ENCODE measurements at regions of chr1 and their contacts with region 1.

Region 1: DNA sequence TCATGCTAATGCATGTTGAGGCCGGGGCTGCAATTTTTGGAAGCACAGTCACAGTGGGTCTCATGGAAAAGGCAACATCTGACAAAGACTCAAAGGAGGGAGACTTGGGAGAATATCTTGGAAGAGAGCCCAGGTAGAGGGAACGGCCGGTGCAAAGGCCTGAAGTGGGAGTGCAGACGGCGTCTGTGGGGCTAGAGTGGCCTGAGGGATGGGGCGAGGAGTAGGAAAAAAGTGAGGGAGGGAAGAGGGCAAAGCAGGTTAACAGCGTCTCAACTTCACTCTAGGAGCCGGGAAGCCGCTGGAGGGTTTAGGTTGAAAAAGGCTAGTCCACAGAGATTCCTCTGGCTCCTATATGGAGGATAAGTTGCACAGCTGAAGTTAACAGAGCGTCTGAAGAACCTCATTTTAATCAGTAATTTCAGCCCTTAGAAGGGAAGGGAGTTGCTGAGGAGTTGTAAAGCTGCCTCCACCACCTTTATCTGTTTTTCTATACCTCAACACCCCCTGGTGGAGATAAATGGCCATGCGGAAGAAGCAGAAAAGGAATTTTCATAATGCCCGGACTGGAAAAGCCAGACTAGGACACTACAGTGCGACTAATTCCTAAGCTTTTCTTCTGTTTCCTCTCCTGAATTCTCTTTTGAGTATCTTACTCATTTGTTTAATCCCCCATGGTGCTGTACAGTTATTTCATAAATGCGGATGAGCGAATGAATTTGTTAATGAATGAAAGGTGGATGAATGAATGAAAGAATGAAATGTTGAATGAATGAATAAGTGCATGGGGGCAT is 78.7 kb upstream of the ZNF281 start:
- DNase-seq: peak; percentile 74
- H3K4me3 ChIP-seq: no peak overlapping the region
- H3K27ac ChIP-seq: no peak overlapping the region
- H3K4me1 ChIP-seq: no peaks in the 10 kb centered on the region
- CTCF ChIP-seq: peak; percentile 95

Region 2: DNA sequence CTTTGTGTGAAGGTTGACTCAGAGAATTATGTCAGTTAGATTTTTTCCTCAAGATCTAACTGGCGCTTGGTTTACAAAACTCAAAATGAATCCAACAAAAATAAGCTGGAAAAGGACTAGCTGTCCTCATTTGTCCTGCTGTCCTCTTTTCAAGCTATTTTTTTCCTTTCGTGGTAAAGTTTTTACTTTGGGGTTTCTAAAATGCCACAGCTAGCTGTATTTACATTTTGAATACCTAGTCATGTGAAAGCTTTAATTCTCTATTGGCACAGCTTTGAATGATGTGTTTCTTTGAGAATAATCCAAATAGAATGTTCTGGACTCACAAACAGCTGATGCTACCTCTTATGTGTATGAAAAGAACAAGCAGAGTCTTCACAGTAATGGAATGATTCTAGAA is 1134.7 kb before region 1 on chr1:
- CTCF ChIA-PET with region 1: no interaction called
- POLR2A ChIA-PET with region 1: no interaction called
- intact Hi-C with region 1: no loop called
- DNase-seq: no peak
- H3K4me3 ChIP-seq: no peak overlapping the region
- H3K27ac ChIP-seq: no peak overlapping the region
- H3K4me1 ChIP-seq: no peaks in the 10 kb centered on the region
- CTCF ChIP-seq: no peak

Region 3: DNA sequence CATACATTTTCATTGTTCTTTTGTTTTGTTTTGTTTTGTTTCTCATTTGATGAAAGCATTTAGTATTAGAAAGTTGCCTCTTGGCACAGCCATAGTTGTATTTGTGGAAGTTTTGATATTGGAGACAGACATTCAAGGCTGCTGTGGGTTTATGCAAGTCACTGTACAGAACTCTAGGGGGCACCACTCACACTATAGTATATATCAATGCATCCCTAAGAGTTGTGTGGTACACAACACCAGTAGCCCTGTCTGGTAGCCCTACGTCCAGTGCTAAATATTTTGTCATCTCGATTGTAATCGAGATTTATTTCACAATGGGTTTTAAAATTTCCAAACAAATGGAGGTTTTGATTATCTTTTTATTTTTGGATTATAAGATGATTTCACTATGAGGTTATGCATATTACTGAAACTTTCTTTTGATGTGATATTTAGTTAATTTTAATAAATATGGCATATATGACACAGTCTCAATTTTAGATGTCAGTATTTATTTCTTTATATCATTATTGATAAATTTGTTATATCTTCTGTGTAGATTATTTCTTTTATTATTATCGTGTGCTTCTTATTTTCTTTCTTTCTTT is 348.8 kb before region 1 on chr1:
- CTCF ChIA-PET with region 1: no interaction called
- POLR2A ChIA-PET with region 1: no interaction called
- intact Hi-C with region 1: loop called (anchors 1 kb)
- DNase-seq: peak; percentile 82
- H3K4me3 ChIP-seq: no peak overlapping the region
- H3K27ac ChIP-seq: no peak overlapping the region
- H3K4me1 ChIP-seq: peaks cover 8% of the 10 kb centered on the region
- CTCF ChIP-seq: peak; percentile 97

Region 4: DNA sequence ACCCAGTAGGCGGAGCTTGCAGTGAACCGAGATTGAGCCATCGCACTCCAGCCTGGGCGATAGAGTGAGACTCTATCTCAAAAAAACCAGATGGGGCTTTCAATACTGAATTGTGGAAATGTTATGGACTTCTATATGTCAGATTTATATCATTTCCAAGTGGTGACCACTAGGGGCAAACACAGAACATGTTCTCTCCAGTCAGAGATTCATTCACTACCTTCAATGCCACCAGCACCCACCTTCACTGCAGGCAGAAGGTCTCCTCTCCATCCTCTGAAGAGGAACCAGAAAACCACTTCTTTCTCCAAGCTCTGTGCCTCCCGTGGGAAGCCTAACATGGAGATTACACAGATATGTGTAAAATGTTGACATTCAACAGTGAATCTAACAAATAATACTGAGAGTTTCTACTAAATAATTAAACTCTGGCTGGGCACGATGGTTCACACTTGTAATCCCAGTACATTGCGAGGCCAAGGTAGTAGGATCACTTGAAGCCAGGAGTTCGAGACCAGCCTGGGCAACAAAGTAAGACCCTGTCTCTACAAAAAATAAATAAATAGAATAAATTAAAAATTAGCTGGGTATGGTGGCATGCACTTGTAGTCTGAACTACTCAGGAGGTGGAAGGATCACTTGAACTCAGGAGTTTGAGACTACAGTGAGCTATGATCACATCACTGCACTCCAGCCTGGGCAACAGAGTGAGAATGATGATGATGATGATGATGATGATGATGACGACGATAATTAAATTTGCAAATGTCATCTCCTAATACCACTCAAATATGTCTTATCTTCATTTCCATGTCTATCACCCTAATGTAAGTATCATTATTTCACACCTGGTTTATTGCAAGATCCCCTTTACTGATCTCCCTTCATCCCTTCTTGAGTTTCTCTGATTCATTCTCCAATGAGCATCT is 229.9 kb before region 1 on chr1:
- CTCF ChIA-PET with region 1: no interaction called
- POLR2A ChIA-PET with region 1: no interaction called
- intact Hi-C with region 1: loop called (anchors 1 kb)
- DNase-seq: peak; percentile 75
- H3K4me3 ChIP-seq: no peak overlapping the region
- H3K27ac ChIP-seq: no peak overlapping the region
- H3K4me1 ChIP-seq: no peaks in the 10 kb centered on the region
- CTCF ChIP-seq: peak; percentile 78

Region 5: GRCh38 chr1:200279810-200280411 is 208.7 kb before region 1 on chr1:
- CTCF ChIA-PET with region 1: interaction called, 3 read pairs
- POLR2A ChIA-PET with region 1: interaction called, 3 read pairs
- intact Hi-C with region 1: loop called (anchors 1 kb)
- DNase-seq: peak; percentile 46
- H3K4me3 ChIP-seq: no peak overlapping the region
- H3K27ac ChIP-seq: no peak overlapping the region
- H3K4me1 ChIP-seq: peaks cover 9% of the 10 kb centered on the region
- CTCF ChIP-seq: peak; percentile 82

Region 6: GRCh38 chr1:200400556-200400955 is 88.0 kb before region 1 on chr1:
- CTCF ChIA-PET with region 1: no interaction called
- POLR2A ChIA-PET with region 1: no interaction called
- intact Hi-C with region 1: no loop called
- DNase-seq: no peak
- H3K4me3 ChIP-seq: no peak overlapping the region
- H3K27ac ChIP-seq: no peak overlapping the region
- H3K4me1 ChIP-seq: peaks cover 16% of the 10 kb centered on the region
- CTCF ChIP-seq: no peak

Region 7: DNA sequence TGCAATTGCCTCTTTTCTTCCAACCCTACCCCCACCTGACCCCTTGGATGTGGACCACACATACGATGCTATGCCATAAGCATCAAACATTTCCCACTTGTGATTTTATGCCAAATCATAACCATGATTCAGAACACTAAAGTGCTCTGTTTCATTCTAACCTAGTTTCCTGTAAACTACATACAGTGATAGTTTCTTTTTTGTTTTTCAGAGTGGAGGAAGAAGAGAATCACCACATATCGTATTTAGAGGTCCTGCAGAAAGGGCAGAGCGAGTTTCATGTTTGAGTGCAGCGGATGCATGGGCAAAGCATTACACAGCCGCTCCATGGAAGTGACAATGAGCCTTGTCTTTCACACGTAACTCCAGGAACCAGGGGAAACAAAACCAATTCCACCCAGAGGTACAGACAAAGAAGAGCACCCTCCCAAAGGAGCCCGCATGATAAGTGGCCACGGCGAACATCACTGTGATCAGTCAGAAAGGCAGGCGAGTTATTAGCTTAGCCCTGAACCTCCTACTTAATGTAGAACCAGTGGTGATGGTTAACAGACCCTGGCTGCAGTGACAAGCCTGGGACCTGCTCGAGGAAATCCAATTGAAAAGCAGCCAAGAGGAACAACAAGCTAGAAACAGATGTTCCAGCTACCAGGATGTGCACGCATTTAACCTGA is 14.7 kb before region 1 on chr1:
- CTCF ChIA-PET with region 1: no interaction called
- POLR2A ChIA-PET with region 1: no interaction called
- intact Hi-C with region 1: no loop called
- DNase-seq: no peak
- H3K4me3 ChIP-seq: no peak overlapping the region
- H3K27ac ChIP-seq: no peak overlapping the region
- H3K4me1 ChIP-seq: peaks cover 4% of the 10 kb centered on the region
- CTCF ChIP-seq: no peak

Region 8: GRCh38 chr1:200510228-200510623 is 21.7 kb after region 1 on chr1:
- CTCF ChIA-PET with region 1: no interaction called
- POLR2A ChIA-PET with region 1: interaction called, 13 read pairs
- intact Hi-C with region 1: no loop called
- DNase-seq: peak; percentile 82
- H3K4me3 ChIP-seq: no peak overlapping the region
- H3K27ac ChIP-seq: no peak overlapping the region
- H3K4me1 ChIP-seq: no peaks in the 10 kb centered on the region
- CTCF ChIP-seq: peak; percentile 99

Region 9: DNA sequence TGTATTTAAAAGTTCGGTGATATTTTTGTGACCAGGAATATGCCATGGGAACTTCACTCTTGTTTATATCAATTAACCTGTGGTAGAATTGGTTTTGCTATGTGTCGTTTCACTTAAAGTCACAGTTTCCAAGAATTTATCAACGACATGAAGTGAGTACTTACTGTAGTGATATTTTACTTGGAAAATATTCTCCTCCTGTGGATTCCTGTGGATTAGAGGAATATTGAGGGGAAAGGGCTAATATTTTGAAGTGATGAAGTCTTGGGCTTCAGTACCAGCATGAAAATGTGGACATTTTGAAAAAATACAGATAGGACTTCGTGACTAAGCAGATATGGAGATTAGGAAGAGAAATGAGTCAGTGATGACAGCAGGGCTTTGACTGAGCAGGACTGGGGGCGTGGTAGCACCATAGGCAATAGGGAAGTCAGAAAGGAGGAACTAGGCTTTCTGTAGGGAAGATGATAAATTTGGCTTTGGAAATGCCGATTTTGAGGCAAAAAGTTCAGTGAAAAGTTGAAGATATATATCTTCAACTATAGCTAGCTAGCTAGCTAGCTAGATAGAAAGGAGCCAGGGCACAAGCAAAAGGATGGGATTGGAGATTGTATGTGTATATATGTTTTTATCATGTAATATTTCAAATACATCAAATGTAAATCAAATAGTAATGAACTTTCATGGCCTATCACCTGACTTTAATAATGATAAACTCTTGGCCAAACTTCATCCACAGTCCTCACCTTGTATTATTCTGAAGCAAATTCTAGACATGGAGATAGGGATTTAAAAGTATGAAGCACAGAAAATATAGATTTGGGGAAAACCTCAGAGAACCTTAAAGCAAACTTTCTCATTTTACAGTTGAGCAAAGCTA is 151.5 kb after region 1 on chr1:
- CTCF ChIA-PET with region 1: no interaction called
- POLR2A ChIA-PET with region 1: no interaction called
- intact Hi-C with region 1: no loop called
- DNase-seq: no peak
- H3K4me3 ChIP-seq: no peak overlapping the region
- H3K27ac ChIP-seq: no peak overlapping the region
- H3K4me1 ChIP-seq: no peaks in the 10 kb centered on the region
- CTCF ChIP-seq: no peak

Measured in OCI-LY7 (cell line).